GM10248 (cell line): ENCODE measurements at regions of chr2 and their contacts with region 1.

Region 1: DNA sequence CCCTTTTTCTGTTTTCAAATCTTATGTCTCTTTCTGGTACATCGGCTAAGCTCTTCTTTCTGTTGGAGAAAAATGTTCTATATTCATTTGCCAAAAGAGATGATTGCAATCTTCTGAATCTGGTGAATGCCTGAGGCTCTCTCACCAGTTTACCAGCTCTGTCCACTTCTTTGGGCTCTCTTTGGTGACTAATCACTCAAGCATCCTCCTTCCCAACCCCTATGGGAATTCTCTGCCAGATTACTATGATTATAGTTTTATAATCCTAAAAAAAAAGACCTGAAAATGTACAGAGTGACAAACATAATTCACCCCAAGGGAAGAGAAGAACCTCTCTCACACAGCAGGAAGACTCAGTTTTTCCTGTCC is 187.3 kb downstream of the CAMKMT start:
- DNase-seq: no peak
- CTCF ChIP-seq: no peak

Region 2: GRCh38 chr2:43131024-43131889 is 1417.8 kb before region 1 on chr2:
- CTCF ChIA-PET with region 1: no interaction called
- POLR2A ChIA-PET with region 1: no interaction called
- DNase-seq: peak; percentile 78
- CTCF ChIP-seq: peak; percentile 48

Region 3: DNA sequence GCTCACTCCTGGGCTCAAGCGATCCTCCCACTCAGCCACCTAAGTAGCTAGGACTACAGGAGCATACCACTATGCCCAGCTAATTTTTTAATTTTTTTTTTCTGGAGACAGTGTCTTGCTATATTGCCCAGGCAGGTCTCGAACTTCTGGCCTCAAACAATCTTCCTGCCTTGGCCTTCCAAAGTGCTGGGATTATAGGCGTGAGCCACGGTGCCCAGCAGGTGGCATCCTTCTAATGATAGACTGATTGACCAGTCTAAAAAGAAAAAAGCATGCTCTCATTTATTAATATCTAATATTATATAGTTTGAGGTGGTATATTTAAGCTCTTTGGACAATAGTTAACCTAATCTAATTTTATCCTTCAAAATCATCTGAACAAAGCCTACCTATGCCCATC is 11.3 kb after region 1 on chr2:
- CTCF ChIA-PET with region 1: interaction called, 15 read pairs
- POLR2A ChIA-PET with region 1: no interaction called
- DNase-seq: no peak
- CTCF ChIP-seq: peak; percentile 52